Caco-2 (cell line): ENCODE measurements at regions of chr17 and their contacts with region 1.

Region 1: DNA sequence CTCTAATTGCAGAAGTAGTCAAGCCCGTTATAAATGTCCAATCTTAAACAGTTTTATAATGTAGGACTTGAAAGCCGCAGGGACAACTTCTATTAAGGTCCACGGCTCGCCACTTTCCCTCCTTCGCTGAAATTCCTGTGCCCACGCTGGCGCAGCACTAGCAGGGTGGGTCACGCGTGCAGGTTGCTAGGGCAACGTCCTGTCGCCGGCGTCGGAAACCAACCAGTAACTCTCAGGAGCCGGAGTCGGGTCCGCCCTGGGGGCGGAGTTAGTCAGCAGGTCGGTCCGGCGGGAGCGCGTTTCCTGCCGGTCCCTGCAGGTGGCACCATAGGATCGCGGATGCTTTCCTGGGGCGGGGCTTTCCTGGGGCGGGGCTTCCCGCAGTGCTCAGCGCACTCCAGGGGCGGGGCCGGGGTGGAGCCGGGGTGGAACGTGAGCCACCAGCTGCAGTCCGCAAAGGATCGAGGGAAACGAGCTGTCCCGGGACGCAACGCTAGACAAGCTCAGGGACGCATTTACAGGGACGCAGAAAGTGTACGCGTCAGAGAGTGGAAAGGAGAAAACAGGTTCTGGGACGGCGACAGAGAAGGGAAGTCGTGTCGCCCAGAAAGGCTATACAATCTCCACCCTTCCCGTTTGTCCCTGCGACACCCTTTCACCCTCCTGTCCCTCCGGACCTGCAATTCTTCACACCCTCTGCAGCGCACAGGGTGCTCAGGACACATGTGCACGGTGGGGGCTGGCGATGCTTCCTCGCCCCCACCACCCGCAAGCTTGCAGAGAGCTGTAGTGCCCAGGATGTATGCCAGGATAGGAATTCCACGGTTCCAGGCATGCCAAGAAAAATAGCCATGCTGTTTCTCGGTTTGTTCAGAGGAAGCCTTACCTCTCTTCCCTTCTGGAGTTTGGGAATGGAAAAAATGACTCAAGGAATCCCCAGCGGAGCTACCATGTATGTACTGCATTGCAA is 12.4 kb downstream of the COPZ2 start:
- DNase-seq: peak; percentile 100
- H3K4me3 ChIP-seq: peak overlapping the region; percentile 43
- H3K4me3 Mint-ChIP-seq: peak overlapping the region; percentile 87
- H3K27ac Mint-ChIP-seq: peak overlapping the region; percentile 89
- H3K4me1 ChIP-seq: peaks cover 26% of the 10 kb centered on the region
- H3K4me1 Mint-ChIP-seq: peaks cover 34% of the 10 kb centered on the region
- H3K27me3 ChIP-seq: peaks cover 5% of the 10 kb centered on the region
- H3K27me3 Mint-ChIP-seq: peaks cover 17% of the 10 kb centered on the region
- CTCF ChIP-seq: peak; percentile 98 to 100

Region 2: GRCh38 chr17:48037036-48037837 is 12.0 kb after region 1 on chr17 and contains the start of gene COPZ2:
- CTCF ChIA-PET with region 1: interaction called, 30 read pairs
- POLR2A ChIA-PET with region 1: interaction called, 3 read pairs
- intact Hi-C with region 1: loop called (anchors 1 kb)
- DNase-seq: peak in 1 of 2 experiments; percentile 66
- H3K4me3 ChIP-seq: peak within 1 kb of the TSS; percentile 60
- H3K4me3 Mint-ChIP-seq: peak within 1 kb of the TSS; percentile 75
- H3K27ac Mint-ChIP-seq: peak within 1 kb of the TSS; percentile 6
- H3K4me1 ChIP-seq: peaks cover 9% of the 10 kb centered on the region; the same call in 1 of the 2 replicates
- H3K4me1 Mint-ChIP-seq: no peaks in the 10 kb centered on the region
- H3K27me3 ChIP-seq: no peaks in the 10 kb centered on the region
- H3K27me3 Mint-ChIP-seq: peaks cover 2% of the 10 kb centered on the region
- CTCF ChIP-seq: peak; percentile 37 to 58
- total RNA-seq, gene COPZ2: 2.0 and 6.7 TPM in 2 replicates

Region 3: DNA sequence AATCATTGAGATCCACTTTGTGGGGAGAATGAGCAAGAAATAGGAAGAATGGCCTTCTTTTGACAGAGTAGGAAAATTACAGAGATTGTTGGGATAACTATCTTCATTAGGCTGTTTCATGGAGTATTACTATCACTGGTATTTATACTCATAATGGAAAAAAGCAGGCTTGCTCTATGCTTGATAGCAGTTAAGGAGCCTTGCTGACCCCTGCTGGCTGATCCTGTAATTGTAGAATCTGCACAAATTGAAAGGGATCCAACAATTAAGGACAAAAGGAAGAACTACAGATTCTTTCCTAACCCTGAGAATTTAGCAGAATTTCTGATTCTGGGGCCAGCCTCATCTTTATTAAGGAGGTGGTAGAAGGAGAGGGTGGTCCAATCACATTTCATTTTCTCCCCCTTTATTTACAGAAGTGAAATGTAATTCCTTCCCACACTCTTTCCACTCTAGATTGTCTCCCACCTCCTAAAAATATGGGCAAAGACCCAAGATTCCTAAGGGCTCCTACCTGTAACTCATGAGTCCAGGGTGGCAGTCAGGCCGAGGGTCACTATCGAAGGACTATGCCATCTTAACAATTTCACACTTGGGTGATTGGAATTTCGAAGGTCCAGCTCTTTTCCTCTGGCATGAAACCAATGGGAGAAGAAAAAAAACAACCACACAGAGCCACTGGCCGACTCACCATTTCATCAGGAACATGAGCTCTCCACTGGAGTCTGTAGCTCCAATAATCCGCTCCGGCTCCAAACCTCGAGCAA is 49.3 kb after region 1 on chr17:
- CTCF ChIA-PET with region 1: interaction called, 225 read pairs
- POLR2A ChIA-PET with region 1: interaction called, 6 read pairs
- intact Hi-C with region 1: loop called (anchors 1 kb)
- DNase-seq: peak; percentile 89 to 92
- H3K4me3 ChIP-seq: no peak overlapping the region
- H3K4me3 Mint-ChIP-seq: no peak overlapping the region
- H3K27ac Mint-ChIP-seq: no peak overlapping the region
- H3K4me1 ChIP-seq: no peaks in the 10 kb centered on the region
- H3K4me1 Mint-ChIP-seq: no peaks in the 10 kb centered on the region
- H3K27me3 ChIP-seq: no peaks in the 10 kb centered on the region
- H3K27me3 Mint-ChIP-seq: no peaks in the 10 kb centered on the region
- CTCF ChIP-seq: peak; percentile 97 to 98

Region 4: DNA sequence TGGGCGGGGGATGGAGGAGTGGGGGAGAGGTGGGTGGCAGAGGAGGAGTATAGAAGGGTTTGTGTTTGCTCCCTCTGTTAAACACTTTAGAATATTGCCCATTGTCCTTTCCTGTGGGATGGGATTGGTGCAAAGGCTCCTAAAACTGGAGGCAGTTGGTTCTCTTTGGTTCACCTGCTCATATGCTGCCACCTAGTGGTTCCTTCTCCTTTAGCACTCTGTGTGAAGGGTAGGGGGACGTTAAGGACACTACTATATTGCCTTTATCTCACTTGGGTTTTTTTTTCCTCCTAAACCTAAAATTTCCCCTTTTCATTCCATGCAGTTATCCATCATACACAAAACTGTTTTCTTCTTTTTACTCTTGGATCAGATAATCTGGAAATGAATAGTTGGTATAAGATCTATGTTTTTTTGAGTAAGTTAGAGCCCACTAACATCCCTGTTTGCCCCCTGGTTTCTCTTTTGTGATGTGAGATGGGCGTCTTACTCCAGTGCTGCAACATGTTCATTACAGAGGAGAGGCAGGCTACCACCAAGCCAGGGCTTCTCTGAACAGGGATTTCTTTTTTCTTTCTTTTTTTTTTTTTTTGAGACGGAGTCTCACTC is 106.1 kb after region 1 on chr17:
- CTCF ChIA-PET with region 1: interaction called, 76 read pairs
- POLR2A ChIA-PET with region 1: interaction called, 14 read pairs
- intact Hi-C with region 1: loop called (anchors 1 kb)
- DNase-seq: peak; percentile 89 to 95
- H3K4me3 ChIP-seq: no peak overlapping the region
- H3K4me3 Mint-ChIP-seq: no peak overlapping the region
- H3K27ac Mint-ChIP-seq: no peak overlapping the region
- H3K4me1 ChIP-seq: no peaks in the 10 kb centered on the region
- H3K4me1 Mint-ChIP-seq: no peaks in the 10 kb centered on the region
- H3K27me3 ChIP-seq: no peaks in the 10 kb centered on the region
- H3K27me3 Mint-ChIP-seq: peaks cover 4% of the 10 kb centered on the region
- CTCF ChIP-seq: peak; percentile 99

Region 5: GRCh38 chr17:48335858-48336500 is 310.8 kb after region 1 on chr17:
- CTCF ChIA-PET with region 1: interaction called, 6 read pairs
- POLR2A ChIA-PET with region 1: no interaction called
- intact Hi-C with region 1: loop called (anchors 10 kb)
- DNase-seq: peak in 1 of 2 experiments; percentile 79
- H3K4me3 ChIP-seq: no peak overlapping the region
- H3K4me3 Mint-ChIP-seq: no peak overlapping the region
- H3K27ac Mint-ChIP-seq: no peak overlapping the region
- H3K4me1 ChIP-seq: no peaks in the 10 kb centered on the region
- H3K4me1 Mint-ChIP-seq: no peaks in the 10 kb centered on the region
- H3K27me3 ChIP-seq: no peaks in the 10 kb centered on the region; the same call in 1 of the 2 replicates
- H3K27me3 Mint-ChIP-seq: peaks cover 18% of the 10 kb centered on the region
- CTCF ChIP-seq: peak; percentile 90 to 96